Calu3 (cell line): ENCODE measurements at regions of chr2 and their contacts with region 1.

Region 1: GRCh38 chr2:36785179-36785795 is 88.8 kb downstream of the VIT start:
- DNase-seq: peak; percentile 77
- H3K4me3 Mint-ChIP-seq: no peak overlapping the region
- H3K27ac Mint-ChIP-seq: no peak overlapping the region
- H3K4me1 Mint-ChIP-seq: no peaks in the 10 kb centered on the region
- H3K27me3 Mint-ChIP-seq: peaks cover 66% of the 10 kb centered on the region
- CTCF ChIP-seq: peak; percentile 95

Region 2: DNA sequence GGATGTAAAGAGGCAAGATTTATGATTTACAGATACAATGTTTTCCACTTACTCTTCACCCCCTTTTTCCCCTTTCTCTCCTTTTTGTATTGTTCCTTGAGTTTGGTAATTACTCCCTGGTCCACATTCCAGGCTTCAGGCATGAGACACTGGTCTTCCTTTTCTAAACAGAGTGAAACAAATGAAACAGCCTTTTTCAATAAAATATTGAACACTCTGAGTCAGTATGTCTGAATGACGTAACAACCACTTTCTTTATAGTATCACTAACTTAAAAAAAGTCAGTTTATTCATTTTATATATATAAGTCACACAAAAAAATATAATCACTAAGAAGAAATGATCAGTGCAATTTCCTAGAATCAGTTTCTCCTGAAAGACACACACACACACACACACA is 101.4 kb after region 1 on chr2:
- CTCF ChIA-PET with region 1: no interaction called
- intact Hi-C with region 1: no loop called
- DNase-seq: no peak
- H3K4me3 Mint-ChIP-seq: no peak overlapping the region
- H3K27ac Mint-ChIP-seq: peak overlapping the region; percentile 48
- H3K4me1 Mint-ChIP-seq: peaks cover 20% of the 10 kb centered on the region
- H3K27me3 Mint-ChIP-seq: no peaks in the 10 kb centered on the region
- CTCF ChIP-seq: no peak

Region 3: DNA sequence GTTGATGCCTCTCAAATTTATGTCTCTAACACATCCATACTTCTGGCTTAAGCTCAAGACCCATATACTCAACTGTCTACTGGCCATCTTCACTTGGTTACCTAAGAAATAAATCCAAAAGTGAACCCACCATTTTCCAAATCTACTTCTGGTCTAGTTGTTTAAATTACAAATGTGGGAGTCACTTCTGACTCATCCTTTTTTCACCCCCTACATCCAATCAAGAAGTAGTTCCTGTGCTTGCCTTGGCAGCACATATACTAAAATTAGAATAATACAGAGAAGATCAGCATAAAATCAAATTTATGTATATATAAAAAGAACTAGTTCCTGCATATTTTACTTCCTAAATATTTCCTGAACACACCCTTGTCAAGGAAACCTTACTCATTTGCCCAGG is 127.4 kb after region 1 on chr2:
- CTCF ChIA-PET with region 1: no interaction called
- intact Hi-C with region 1: loop called (anchors 5 kb)
- DNase-seq: no peak
- H3K4me3 Mint-ChIP-seq: no peak overlapping the region
- H3K27ac Mint-ChIP-seq: no peak overlapping the region
- H3K4me1 Mint-ChIP-seq: no peaks in the 10 kb centered on the region
- H3K27me3 Mint-ChIP-seq: no peaks in the 10 kb centered on the region
- CTCF ChIP-seq: no peak

Region 4: GRCh38 chr2:37005118-37005868 is 220.0 kb after region 1 on chr2:
- CTCF ChIA-PET with region 1: no interaction called
- intact Hi-C with region 1: loop called (anchors 1 kb)
- DNase-seq: peak; percentile 11
- H3K4me3 Mint-ChIP-seq: no peak overlapping the region
- H3K27ac Mint-ChIP-seq: no peak overlapping the region
- H3K4me1 Mint-ChIP-seq: no peaks in the 10 kb centered on the region
- H3K27me3 Mint-ChIP-seq: no peaks in the 10 kb centered on the region
- CTCF ChIP-seq: peak; percentile 69